Dendritic cell treated with granulocyte-macrophage colony-stimulating factor and Interleukin-4, amounts not matched to agents 40 ng/mL and 50 ng/mL, for 4 days (primary cell): ENCODE measurements at regions of chr21 and their contacts with region 1.

Region 1: GRCh38 chr21:35051287-35051818 is 2.3 kb upstream of the RUNX1 start:
- H3K4me3 Mint-ChIP-seq: no peak overlapping the region
- H3K27ac Mint-ChIP-seq: peak overlapping the region; percentile 95
- H3K4me1 Mint-ChIP-seq: peaks cover 56% of the 10 kb centered on the region
- H3K27me3 Mint-ChIP-seq: no peaks in the 10 kb centered on the region

Region 2: DNA sequence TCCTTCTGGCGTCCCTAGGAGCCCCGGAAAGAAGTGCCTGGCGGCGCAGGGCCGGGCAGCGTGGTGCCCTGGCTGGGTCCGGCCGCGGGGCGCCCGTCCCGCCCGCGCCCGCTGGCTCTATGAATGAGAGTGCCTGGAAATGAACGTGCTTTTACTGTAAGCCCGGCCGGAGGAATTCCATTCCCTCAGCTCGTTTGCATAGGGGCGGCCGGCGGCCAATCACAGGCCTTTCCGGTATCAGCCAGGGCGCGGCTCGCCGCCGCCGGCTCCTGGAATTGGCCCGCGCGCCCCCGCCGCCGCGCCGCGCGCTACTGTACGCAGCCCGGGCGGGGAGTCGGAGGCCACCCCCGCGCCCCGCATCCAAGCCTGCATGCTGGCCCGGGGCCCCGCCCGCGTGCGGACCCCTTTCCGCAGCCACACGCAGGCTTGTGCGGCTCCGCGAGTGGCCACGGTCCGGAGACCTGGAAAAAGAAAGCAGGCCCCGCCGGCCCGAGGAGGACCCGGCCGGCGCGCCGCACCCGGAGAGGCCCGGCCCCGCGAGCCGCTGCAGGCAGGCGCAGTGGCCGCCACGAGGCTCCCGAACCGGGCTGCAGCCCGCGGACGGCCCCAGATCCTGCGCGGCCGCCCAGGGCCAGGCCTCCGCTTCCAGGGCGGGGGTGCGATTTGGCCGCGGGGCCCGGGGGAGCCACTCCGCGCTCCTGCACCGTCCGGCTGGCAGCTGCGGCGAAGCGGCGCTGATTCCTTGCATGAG is 162.6 kb before region 1 on chr21:
- intact Hi-C with region 1: loop called (anchors 1 kb)
- H3K4me3 Mint-ChIP-seq: peak overlapping the region; percentile 95
- H3K27ac Mint-ChIP-seq: peak overlapping the region; percentile 97
- H3K4me1 Mint-ChIP-seq: peaks cover 10% of the 10 kb centered on the region
- H3K27me3 Mint-ChIP-seq: no peaks in the 10 kb centered on the region

Region 3: DNA sequence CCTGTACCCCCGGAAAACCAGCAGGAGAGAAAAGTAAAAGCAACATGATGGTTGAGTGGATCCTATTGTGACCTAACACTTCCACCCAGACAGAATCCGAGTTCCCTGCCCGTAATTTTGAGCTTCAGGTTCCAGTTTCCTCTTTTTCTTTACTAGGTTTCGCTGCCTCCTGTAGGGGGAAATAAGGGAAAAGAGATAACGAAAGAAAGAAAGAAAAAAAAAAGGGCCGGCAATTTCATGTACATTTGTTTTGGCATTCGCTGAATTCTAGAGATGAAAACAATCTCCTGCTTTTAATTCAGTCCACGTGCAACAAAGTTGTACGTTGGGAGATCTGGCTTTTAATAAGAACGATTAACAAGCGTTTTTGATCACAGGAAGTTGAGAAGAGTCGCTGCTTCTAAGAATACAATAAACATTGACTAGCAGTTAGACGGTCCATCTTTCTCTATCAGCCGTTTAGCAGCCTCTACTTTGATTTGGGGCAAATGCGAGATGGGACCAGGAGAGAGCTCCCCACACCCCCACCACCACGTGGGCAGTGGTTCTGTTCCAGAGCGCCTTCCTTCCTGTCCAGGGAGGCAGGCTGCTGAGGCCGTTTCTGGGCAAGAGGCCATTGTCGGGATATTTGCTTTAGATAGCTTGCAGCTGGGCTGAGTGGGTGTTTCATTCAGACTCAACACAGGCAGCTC is 153.6 kb after region 1 on chr21:
- intact Hi-C with region 1: loop called (anchors 5 kb)
- H3K4me3 Mint-ChIP-seq: peak overlapping the region; percentile 61
- H3K27ac Mint-ChIP-seq: peak overlapping the region; percentile 64
- H3K4me1 Mint-ChIP-seq: peaks cover 23% of the 10 kb centered on the region
- H3K27me3 Mint-ChIP-seq: peaks cover 6% of the 10 kb centered on the region

Region 4: GRCh38 chr21:35400233-35400957 is 349.0 kb after region 1 on chr21:
- intact Hi-C with region 1: loop called (anchors 5 kb)
- H3K4me3 Mint-ChIP-seq: peak overlapping the region; percentile 42
- H3K27ac Mint-ChIP-seq: peak overlapping the region; percentile 88
- H3K4me1 Mint-ChIP-seq: peaks cover 45% of the 10 kb centered on the region
- H3K27me3 Mint-ChIP-seq: no peaks in the 10 kb centered on the region

Region 5: DNA sequence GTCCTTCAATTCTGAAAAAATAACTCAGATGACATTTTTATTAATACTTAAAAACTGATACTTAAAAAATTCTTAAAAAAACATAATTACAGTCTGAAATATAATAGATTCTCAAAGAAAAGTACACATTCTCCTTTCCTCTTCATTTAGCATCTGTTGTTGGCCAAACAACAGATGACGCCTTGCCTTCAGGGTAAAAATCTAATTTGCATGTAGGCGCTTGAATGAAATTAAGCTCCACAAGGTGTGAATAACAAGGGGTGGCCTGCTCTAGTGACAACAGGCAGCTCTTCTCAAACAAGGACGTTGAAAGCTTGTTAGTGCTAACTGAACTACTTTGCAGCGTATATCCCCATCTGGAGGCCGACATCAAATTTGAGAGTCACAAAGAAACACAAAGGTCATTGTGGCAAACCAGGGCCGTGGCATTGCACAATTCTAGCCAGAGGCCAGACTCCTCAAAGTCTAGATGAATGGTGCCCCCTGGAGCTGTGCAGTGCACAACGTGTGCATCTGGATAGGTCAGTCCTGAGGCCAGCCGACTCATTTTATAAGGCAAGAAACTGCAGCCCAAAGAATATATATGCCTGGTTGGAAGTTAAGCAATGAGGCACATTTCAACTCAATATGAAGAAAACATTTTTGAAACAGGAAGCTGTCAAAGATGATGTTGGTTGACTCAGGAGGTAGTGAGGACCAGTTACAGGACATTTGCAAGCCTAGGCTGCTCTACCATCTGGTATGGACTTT is 457.0 kb after region 1 on chr21:
- intact Hi-C with region 1: loop called (anchors 1 kb)
- H3K4me3 Mint-ChIP-seq: no peak overlapping the region
- H3K27ac Mint-ChIP-seq: peak overlapping the region; percentile 78
- H3K4me1 Mint-ChIP-seq: peaks cover 65% of the 10 kb centered on the region
- H3K27me3 Mint-ChIP-seq: no peaks in the 10 kb centered on the region